ENCODE measurements at regions of chr10 and their contacts with region 1.

Region 1: GRCh38 chr10:32958085-32959005 is at the start of gene ITGB1:
- DNase-seq: peak; percentile 90 to 96 (median 90)
- ATAC-seq: peak; percentile 81
- H3K4me3 ChIP-seq: peak within 1 kb of the TSS; percentile 81
- H3K27ac ChIP-seq: peak within 1 kb of the TSS; percentile 97
- H3K4me1 ChIP-seq: peaks cover 10 to 48% of the 10 kb centered on the region in 2 experiments
- H3K27me3 ChIP-seq: no peaks in the 10 kb centered on the region
- CTCF ChIP-seq: no peak
- EP300 ChIP-seq: 0 out of 2 replicates have a peak, but pooled peaks have one; percentile 9
- POLR2A ChIP-seq: peak; percentile 92
- RAD21 ChIP-seq: 0 out of 4 replicates have a peak, but pooled peaks of 1 of the 2 experiments have one; percentile 9
- polyA plus RNA-seq, gene ITGB1: 40.2 to 61.9 TPM

Region 2: DNA sequence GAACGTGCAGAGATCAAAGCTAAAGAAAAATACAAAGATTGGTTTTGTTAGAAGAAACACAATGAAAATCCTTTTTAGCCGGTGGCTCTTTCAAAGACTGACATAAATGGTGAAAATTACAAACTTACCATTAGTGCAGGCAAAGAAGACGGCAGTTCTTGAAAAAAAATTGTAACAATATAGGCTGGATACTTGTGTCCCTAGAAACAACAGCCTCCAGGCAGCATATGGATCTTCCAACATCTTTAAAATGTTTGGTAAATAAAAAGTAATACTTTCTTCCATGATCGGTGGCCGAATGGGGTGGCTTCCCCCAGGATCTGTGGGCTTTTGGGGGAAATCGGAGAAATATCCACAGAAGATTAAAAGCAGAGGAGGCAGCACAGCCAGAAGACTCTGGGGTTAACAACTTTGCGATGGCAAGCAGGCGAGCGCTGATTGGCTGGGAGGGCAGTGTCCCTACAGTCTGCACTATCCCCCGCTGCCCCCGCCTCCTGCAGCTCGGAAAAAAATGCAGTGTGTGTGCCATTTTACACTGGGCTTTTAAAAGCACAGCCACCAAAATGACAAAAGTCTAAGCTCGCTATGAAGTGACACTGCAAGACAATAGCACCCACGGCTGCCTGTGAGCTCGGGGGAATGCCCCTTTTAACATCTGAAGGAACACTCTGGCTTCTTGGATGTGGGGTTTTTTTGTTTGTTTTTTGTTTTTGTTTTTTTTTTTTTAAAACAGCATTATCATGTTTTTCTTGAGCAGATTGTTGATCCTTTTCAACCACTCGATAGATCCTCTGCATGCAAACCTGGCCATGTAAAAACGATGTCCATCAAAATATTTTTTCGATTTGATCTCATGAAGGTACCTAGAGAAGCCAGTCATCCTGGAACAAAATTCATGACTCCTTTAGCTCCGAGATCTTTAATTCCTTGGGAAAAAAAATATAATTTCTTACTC is 579.7 kb before region 1 on chr10:
- CTCF ChIA-PET with region 1: no interaction called
- POLR2A ChIA-PET with region 1: no interaction called
- in situ Hi-C with region 1: no loop called
- intact Hi-C with region 1: loop called (anchors 10 kb)
- DNase-seq: peak; percentile 92 to 95 (median 94)
- ATAC-seq: peak; percentile 94
- H3K4me3 ChIP-seq: peak overlapping the region; percentile 63
- H3K27ac ChIP-seq: peak overlapping the region; percentile 96
- H3K4me1 ChIP-seq: peaks cover 4 to 9% of the 10 kb centered on the region in 2 experiments; a peak in 3 of 5 replicates
- H3K27me3 ChIP-seq: no peaks in the 10 kb centered on the region
- CTCF ChIP-seq: no peak
- EP300 ChIP-seq: no peak
- POLR2A ChIP-seq: peak; percentile 83
- RAD21 ChIP-seq: no peak

Region 3: DNA sequence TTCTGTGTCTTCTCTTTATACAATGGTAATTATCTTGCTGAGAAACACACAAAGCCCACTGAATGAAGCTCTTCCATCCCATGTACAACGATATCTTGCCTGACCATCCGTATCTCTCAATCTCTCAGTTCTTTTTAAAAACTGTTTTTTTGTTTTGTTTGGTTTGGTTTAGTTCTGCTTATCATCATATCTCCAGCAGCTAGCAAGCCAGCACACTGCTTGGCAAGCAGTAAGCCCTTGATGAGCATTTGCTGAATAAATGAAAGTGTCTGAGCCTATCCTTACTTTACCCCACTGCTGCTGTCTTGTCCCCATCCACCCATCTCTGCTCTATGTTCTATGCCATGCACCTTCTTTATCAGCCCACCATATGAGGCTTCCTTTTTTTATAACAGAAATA is 34.5 kb before region 1 on chr10:
- CTCF ChIA-PET with region 1: no interaction called
- POLR2A ChIA-PET with region 1: interaction called, 5 read pairs
- in situ Hi-C with region 1: no loop called
- intact Hi-C with region 1: loop called (anchors 5 kb)
- DNase-seq: no peak
- ATAC-seq: peak; percentile 74
- H3K4me3 ChIP-seq: no peak overlapping the region
- H3K27ac ChIP-seq: no peak overlapping the region
- H3K4me1 ChIP-seq: peaks cover 0 to 22% of the 10 kb centered on the region in 2 experiments; a peak in 3 of 5 replicates
- H3K27me3 ChIP-seq: no peaks in the 10 kb centered on the region
- CTCF ChIP-seq: no peak
- EP300 ChIP-seq: no peak
- POLR2A ChIP-seq: no peak
- RAD21 ChIP-seq: no peak

Region 4: GRCh38 chr10:32943854-32944661 is 14.3 kb before region 1 on chr10:
- CTCF ChIA-PET with region 1: no interaction called
- POLR2A ChIA-PET with region 1: interaction called, 16 read pairs
- in situ Hi-C with region 1: no loop called
- intact Hi-C with region 1: no loop called
- DNase-seq: peak in 2 of 4 experiments; percentile 17 to 22
- ATAC-seq: peak; percentile 43
- H3K4me3 ChIP-seq: no peak overlapping the region
- H3K27ac ChIP-seq: peak overlapping the region; percentile 17; the same call in 2 of the 3 replicates
- H3K4me1 ChIP-seq: peaks cover 11 to 57% of the 10 kb centered on the region in 2 experiments
- H3K27me3 ChIP-seq: no peaks in the 10 kb centered on the region
- CTCF ChIP-seq: no peak
- EP300 ChIP-seq: no peak
- POLR2A ChIP-seq: no peak
- RAD21 ChIP-seq: no peak

Region 5: GRCh38 chr10:33008499-33009243 is 50.3 kb after region 1 on chr10:
- CTCF ChIA-PET with region 1: interaction called, 3 read pairs
- POLR2A ChIA-PET with region 1: interaction called, 3 read pairs
- in situ Hi-C with region 1: no loop called
- intact Hi-C with region 1: loop called (anchors 2 kb)
- DNase-seq: peak; percentile 59 to 80 (median 64)
- ATAC-seq: peak; percentile 75
- H3K4me3 ChIP-seq: no peak overlapping the region
- H3K27ac ChIP-seq: no peak overlapping the region
- H3K4me1 ChIP-seq: peaks cover 3 to 6% of the 10 kb centered on the region in 2 experiments; a peak in 3 of 5 replicates
- H3K27me3 ChIP-seq: peaks cover 0 to 3% of the 10 kb centered on the region in 2 experiments; a peak in 1 of 5 replicates
- CTCF ChIP-seq: peak; percentile 87 to 98 (median 94)
- EP300 ChIP-seq: no peak
- POLR2A ChIP-seq: no peak
- RAD21 ChIP-seq: peak; percentile 99 to 100

Region 6: DNA sequence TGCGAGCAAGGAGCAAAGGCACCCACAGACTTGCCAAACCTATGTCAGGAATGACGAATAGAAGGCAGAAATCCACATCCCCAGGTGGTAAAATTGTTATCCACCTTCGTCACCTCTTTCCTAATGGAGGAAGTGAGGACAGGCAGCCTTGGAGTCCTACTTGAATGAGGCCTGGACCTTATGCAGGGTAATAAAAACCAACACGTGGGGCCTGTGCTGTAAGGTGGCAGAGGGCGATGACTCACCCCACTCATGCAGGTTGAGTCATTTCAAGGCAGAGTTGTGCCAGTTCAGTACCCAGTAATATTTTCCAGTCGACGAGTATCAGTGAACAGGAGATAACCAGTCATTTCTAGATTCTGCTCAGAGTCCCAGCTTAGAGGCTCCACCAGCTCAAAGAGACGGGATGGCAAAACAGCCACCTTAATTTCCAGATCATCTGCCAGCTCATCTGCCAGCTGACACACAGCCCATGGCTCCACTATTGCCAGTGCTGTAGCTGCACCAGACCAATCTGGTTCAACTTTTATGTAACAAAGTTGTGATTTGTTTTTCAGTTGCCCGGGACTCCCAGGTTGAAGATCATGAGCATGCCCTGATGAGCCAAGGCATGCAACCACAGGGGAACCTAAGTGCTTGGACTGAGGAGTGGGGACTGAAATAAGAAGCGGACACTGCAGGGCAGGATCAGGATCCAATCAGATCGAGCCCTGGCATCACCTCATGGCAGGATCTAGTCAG is 175.8 kb after region 1 on chr10:
- CTCF ChIA-PET with region 1: no interaction called
- POLR2A ChIA-PET with region 1: no interaction called
- in situ Hi-C with region 1: no loop called
- intact Hi-C with region 1: no loop called
- DNase-seq: no peak
- ATAC-seq: no peak
- H3K4me3 ChIP-seq: no peak overlapping the region
- H3K27ac ChIP-seq: no peak overlapping the region
- H3K4me1 ChIP-seq: no peaks in the 10 kb centered on the region
- H3K27me3 ChIP-seq: peaks cover 4 to 25% of the 10 kb centered on the region in 2 experiments; a peak in 3 of 5 replicates
- CTCF ChIP-seq: no peak
- EP300 ChIP-seq: no peak
- POLR2A ChIP-seq: no peak
- RAD21 ChIP-seq: no peak